BJ (cell line): ENCODE measurements at regions of chr4 and their contacts with region 1.

Region 1: DNA sequence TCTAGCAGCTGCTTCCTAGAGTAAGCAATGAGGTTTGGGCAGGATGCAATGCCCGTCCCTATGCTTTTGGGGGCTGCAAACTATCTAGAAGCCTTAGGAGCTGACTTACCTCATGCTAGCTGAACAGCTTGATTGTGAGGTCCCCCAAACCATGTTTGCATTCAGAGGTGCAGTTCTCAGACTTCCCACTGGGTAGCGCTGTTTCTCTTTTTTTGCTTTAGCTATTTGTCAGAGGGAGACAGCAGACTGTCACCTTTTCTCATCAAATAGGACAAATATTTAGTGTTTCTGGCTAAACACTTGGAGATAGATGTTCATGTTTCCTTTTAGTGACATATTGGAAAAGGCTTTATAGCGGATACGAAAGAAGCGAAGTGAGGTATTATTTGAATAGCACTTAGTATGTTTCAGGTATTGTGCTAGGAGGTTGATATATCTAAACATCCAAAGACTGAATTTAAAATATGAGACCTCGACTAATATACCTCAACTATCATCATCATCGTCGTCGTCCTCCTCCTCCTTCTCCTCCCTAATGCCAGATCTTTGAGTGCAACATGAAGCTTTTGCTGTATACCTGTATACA is 18.7 kb upstream of the TMEM192 start:
- DNase-seq: no peak
- H3K4me3 ChIP-seq: no peak overlapping the region
- H3K27me3 ChIP-seq: no peaks in the 10 kb centered on the region
- CTCF ChIP-seq: peak; percentile 88

Region 2: DNA sequence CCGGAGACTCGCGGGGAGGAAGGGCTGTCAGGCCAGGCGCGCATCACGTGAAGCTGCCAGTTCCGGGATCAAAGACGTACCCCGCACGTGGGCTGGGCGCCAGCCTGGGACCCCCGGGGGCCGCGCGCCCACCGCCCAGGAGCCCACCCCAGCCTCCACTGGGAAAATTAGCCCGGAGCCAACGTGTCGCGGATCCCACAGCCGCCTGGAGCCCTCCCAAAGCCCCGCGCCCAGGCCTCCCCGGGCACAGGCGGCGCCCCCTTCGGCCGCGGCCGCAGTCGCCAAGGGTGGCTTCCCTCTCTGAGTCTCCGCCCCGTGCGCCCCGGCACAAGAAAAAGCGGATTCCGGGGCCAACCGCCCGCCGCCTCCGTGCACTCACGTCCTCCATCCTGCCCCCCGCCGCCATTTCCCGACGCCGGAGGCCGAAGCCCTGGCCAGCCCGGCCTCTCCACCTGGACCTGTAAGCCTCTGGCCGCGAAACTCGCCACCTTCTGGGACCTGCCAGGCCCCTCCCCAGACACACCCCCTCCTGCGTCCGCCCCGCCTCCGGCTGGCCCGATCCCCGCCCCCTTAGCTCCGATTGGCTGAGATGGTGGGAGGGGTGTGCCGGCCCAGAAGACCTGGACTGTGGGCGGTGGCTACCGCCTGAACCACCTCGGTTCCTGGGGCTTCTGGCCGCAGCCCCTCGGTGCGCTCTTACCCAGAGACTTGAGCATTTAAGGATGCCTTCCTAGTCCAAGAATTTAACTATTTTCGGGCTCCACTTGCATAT is 18.8 kb before region 1 on chr4 and contains the start of gene TMEM192:
- CTCF ChIA-PET with region 1: interaction called, 17 read pairs
- POLR2A ChIA-PET with region 1: no interaction called
- DNase-seq: peak; percentile 61
- H3K4me3 ChIP-seq: peak within 1 kb of the TSS; percentile 98
- H3K27me3 ChIP-seq: no peaks in the 10 kb centered on the region
- CTCF ChIP-seq: no peak
- polyA plus RNA-seq, gene TMEM192: 11.1 and 19.3 TPM in 2 replicates

Region 3: GRCh38 chr4:165118256-165118909 is 13.0 kb before region 1 on chr4:
- CTCF ChIA-PET with region 1: interaction called, 19 read pairs
- POLR2A ChIA-PET with region 1: no interaction called
- DNase-seq: no peak
- H3K4me3 ChIP-seq: no peak overlapping the region
- H3K27me3 ChIP-seq: no peaks in the 10 kb centered on the region
- CTCF ChIP-seq: no peak

Region 4: DNA sequence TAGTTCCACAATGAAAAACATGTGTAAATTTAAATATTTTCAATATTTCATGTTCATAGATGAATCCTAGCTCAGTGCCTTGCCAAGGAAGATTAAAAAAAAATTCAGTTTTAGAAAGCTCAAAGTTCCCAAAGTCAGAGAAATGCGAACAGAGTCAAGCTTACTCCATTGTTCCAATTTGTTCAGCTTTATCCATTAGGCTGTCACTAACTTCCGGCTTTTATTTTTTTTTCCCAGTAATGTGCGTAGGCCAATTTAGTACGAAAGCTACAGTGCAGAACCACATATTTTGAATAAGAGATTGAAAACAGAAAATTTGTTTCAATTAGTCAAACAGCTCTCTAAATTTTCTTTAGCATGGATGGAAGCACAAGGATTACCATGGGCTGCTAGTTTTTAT is 52.9 kb after region 1 on chr4:
- CTCF ChIA-PET with region 1: interaction called, 10 read pairs
- POLR2A ChIA-PET with region 1: no interaction called
- DNase-seq: no peak
- H3K4me3 ChIP-seq: no peak overlapping the region
- H3K27me3 ChIP-seq: no peaks in the 10 kb centered on the region
- CTCF ChIP-seq: no peak

Region 5: GRCh38 chr4:165194368-165194767 is 63.0 kb after region 1 on chr4:
- CTCF ChIA-PET with region 1: no interaction called
- POLR2A ChIA-PET with region 1: no interaction called
- DNase-seq: no peak
- H3K4me3 ChIP-seq: no peak overlapping the region
- H3K27me3 ChIP-seq: no peaks in the 10 kb centered on the region
- CTCF ChIP-seq: no peak

Region 6: GRCh38 chr4:165327211-165328100 is 196.1 kb after region 1 on chr4 and contains the start of gene MSMO1:
- CTCF ChIA-PET with region 1: interaction called, 10 read pairs
- POLR2A ChIA-PET with region 1: no interaction called
- DNase-seq: peak; percentile 94
- H3K4me3 ChIP-seq: peak within 1 kb of the TSS; percentile 69
- H3K27me3 ChIP-seq: no peaks in the 10 kb centered on the region
- CTCF ChIP-seq: no peak
- polyA plus RNA-seq, gene MSMO1: 14.9 and 25.0 TPM in 2 replicates

Region 7: DNA sequence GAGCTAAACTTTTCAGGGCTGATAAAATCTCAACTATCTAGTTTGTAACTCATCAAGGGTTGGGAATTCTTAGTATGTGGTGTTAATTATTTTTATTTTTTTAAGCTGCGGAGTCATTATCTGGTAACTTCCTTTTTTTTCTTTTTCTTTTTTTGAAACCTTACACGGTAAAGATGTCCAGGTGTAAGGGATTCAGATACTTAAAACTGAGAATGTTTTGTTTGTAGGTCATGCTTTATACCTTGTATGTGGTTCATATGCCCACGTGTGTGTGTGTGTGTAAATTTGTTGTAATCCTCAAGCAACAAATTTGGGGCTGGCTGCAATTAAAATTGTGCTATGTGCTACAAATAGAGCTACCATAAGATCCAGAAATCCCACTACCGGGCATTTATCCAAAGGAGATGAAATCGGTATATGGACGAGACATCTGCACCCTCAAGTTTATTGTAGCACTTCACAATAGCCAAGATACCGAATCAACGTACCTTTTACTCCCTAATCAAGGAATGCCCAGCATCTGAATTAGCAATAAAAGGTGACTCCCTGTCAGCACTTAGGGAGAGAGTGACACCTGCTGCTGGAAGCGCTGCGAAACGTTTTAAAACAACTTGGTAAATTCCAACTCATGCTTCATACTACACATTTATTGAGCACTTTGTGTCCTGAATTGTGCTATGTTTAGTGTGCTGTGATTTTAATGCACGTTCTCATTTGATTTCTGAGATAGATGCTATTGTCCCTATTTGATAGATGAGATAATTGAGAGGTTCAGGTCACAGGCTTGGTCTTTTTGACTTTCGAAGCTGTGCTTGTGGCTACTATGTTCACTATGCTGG is 212.2 kb after region 1 on chr4:
- CTCF ChIA-PET with region 1: interaction called, 33 read pairs
- POLR2A ChIA-PET with region 1: no interaction called
- DNase-seq: no peak
- H3K4me3 ChIP-seq: no peak overlapping the region
- H3K27me3 ChIP-seq: no peaks in the 10 kb centered on the region
- CTCF ChIP-seq: no peak

Region 8: GRCh38 chr4:165464813-165465381 is 333.6 kb after region 1 on chr4:
- CTCF ChIA-PET with region 1: interaction called, 35 read pairs
- POLR2A ChIA-PET with region 1: no interaction called
- DNase-seq: no peak
- H3K4me3 ChIP-seq: no peak overlapping the region
- H3K27me3 ChIP-seq: 0 out of 2 replicates have a peak, but pooled peaks cover 2% of the 10 kb centered on the region
- CTCF ChIP-seq: peak; percentile 74

Region 9: DNA sequence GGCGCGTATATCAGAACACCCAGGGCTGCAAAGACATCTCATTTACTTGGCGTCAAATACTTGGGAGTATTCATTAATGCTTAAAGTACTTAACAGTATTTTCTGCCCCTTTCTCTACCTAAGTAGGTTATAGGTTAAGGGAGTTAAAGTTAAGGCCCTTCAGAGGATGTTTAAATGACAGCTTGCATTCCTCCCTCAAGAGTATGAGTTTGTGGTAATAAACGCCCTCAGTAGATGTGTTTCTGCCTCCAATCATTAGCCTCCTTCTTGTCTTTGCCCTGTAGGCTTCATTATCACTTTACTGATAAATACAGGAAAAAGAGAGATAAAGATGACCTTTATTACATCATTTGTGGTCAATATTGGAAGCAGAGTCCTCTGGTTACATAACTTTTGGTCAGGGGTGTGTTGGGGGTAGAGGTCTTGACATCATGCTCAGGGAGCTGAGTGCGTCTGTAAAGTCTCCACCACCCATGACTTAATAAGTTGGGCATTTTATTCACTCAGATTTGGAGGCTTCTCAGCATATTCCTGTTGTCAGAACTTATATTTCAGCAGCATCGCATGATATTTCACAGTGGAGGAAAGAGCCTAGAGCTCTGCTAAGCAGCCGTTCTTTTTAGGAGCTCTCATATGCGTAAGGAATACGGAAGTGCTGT is 393.3 kb after region 1 on chr4:
- CTCF ChIA-PET with region 1: no interaction called
- POLR2A ChIA-PET with region 1: no interaction called
- DNase-seq: no peak
- H3K4me3 ChIP-seq: no peak overlapping the region
- H3K27me3 ChIP-seq: no peaks in the 10 kb centered on the region
- CTCF ChIP-seq: no peak